Breast epithelium (tissue), 4 donors: ENCODE measurements at regions of chr10 and their contacts with region 1.

Region 1: GRCh38 chr10:128763588-128763987 is 637.4 kb upstream of the MKI67 start:
- DNase-seq: no peak
- H3K4me3 ChIP-seq: no peak overlapping the region
- H3K27ac ChIP-seq: no peak overlapping the region
- H3K4me1 ChIP-seq: no peaks in the 10 kb centered on the region
- H3K27me3 ChIP-seq: no peaks in the 10 kb centered on the region
- CTCF ChIP-seq: no peak
- POLR2A ChIP-seq: no peak

Region 2: GRCh38 chr10:128186959-128187787 is 576.4 kb before region 1 on chr10:
- intact Hi-C with region 1: loop called (anchors 10 kb)
- DNase-seq: no peak
- H3K4me3 ChIP-seq: peak overlapping the region in 2 of 3 donors; percentile 1 to 46
- H3K27ac ChIP-seq: no peak overlapping the region
- H3K4me1 ChIP-seq: no peaks in the 10 kb centered on the region
- H3K27me3 ChIP-seq: no peaks in the 10 kb centered on the region
- CTCF ChIP-seq: no peak
- POLR2A ChIP-seq: no peak

Region 3: GRCh38 chr10:128727114-128727513 is 36.5 kb before region 1 on chr10:
- intact Hi-C with region 1: no loop called
- DNase-seq: no peak
- H3K4me3 ChIP-seq: no peak overlapping the region
- H3K27ac ChIP-seq: no peak overlapping the region
- H3K4me1 ChIP-seq: no peaks in the 10 kb centered on the region
- H3K27me3 ChIP-seq: no peaks in the 10 kb centered on the region
- CTCF ChIP-seq: no peak
- POLR2A ChIP-seq: no peak

Region 4: GRCh38 chr10:128825626-128826025 is 62.0 kb after region 1 on chr10:
- intact Hi-C with region 1: no loop called
- DNase-seq: no peak
- H3K4me3 ChIP-seq: no peak overlapping the region
- H3K27ac ChIP-seq: no peak overlapping the region
- H3K4me1 ChIP-seq: no peaks in the 10 kb centered on the region
- H3K27me3 ChIP-seq: peaks cover 0 to 3% of the 10 kb centered on the region in 2 donors
- CTCF ChIP-seq: no peak
- POLR2A ChIP-seq: no peak